Endothelial cell of umbilical vein (primary cell): ENCODE measurements at regions of chr3 and their contacts with region 1.

Region 1: DNA sequence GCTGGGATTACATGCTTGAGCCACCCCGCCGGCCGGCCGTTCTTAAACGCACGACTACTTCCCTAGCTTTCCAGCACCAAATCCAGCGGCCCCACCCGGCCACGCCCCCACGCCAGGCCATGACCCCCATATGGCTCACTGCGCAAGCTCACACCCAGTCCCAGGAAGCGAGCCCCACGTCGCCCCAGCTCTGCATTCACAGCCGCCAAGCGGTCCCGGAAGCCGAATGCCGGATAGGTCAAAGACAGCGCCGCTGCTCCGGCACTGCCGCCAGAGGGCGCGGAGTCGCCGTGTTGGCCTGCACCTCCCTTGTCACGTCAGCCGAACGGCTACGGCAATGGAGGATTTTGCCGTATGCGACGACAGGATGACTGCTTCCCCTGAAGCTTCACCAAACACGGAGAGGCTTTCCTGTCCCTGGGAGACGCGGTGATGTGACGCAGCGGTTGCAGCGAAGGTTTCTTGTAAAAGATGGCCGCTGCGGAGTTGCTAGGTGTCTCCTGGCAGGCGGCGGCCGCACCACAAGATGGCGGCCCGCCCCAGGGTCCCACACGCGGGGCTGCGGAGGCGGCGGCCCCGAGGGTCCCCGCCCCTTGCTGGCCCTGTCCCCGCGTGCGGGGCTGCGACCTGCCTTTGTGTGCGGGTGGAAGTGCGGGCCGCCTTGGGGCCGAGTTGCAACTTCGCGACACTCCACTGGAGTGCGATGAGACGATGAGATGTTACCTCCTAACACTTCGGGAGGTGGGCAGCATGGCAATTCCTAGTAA is 30.2 kb upstream of the RPN1 start:
- DNase-seq: peak; percentile 97
- H3K4me3 ChIP-seq: peak overlapping the region in 2 of 3 experiments; percentile 47 to 60
- H3K27ac ChIP-seq: peak overlapping the region; percentile 54
- H3K4me1 ChIP-seq: peaks cover 5% of the 10 kb centered on the region
- H3K27me3 ChIP-seq: no peaks in the 10 kb centered on the region
- CTCF ChIP-seq: peak; percentile 99
- POLR2A ChIP-seq: peak; percentile 71

Region 2: DNA sequence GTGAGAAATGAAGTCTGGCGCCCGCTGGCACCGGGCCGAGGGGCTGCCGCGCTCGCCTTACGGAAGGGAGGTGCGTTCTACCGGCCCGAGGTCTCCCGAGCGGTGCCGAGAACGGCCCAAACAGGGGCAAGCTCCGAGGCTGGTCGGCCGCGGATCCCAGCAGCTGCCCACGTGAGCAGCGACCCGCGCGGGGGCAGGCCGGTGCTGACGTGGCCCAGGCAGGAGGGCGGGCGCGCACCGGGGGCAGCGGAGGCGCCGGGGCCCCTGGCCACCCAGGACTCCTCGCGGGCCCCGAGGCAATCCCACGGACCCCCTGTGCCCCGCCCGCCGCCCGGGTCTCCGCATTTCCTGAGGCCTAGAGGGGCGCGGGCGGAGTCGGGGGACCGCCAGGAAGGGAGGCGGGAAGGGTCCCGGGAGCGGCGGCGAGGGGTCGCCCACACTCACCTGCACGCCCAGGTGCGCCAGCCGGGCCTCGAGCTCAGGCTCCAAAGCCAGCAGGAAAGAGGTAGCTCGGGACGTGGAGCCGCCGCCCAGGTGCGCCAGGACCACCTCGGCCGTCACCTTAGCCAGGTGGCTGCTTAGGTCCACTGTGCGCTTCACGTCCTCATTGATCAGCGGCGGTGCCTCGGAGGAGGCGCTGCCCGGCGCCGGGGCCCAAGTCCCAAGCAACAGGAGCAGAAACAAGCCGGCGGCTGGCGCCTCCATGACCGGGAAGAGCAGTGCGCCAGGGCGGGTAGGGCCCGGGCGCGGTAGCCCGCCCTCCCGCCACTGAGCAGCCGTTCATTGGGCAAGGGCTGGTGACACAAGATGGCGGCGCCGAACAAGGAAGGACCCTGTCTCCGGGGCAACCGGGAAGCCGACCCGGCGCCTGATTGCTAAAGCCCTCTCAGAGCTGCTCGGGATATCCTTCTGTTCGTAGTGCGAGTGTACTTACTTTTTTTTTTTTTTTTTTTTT is 30.4 kb before region 1 on chr3 and contains the start of gene RPN1:
- CTCF ChIA-PET with region 1: interaction called, 9 read pairs
- POLR2A ChIA-PET with region 1: interaction called, 5 read pairs
- dilution Hi-C with region 1: no loop called
- intact Hi-C with region 1: loop called (anchors 1 kb)
- DNase-seq: peak; percentile 97
- H3K4me3 ChIP-seq: peak within 1 kb of the TSS; percentile 92 to 99 (median 96)
- H3K27ac ChIP-seq: peak within 1 kb of the TSS; percentile 95
- H3K4me1 ChIP-seq: peaks cover 8% of the 10 kb centered on the region
- H3K27me3 ChIP-seq: no peaks in the 10 kb centered on the region
- CTCF ChIP-seq: no peak
- POLR2A ChIP-seq: peak; percentile 89
- total RNA-seq, gene RPN1: 244 and 250 TPM in 2 replicates

Region 3: GRCh38 chr3:128698211-128699064 is 17.7 kb after region 1 on chr3:
- CTCF ChIA-PET with region 1: interaction called, 20 read pairs
- POLR2A ChIA-PET with region 1: interaction called, 4 read pairs
- dilution Hi-C with region 1: no loop called
- intact Hi-C with region 1: no loop called
- DNase-seq: peak; percentile 23
- H3K4me3 ChIP-seq: peak overlapping the region; percentile 38 to 54 (median 52)
- H3K27ac ChIP-seq: no peak overlapping the region
- H3K4me1 ChIP-seq: no peaks in the 10 kb centered on the region
- H3K27me3 ChIP-seq: peaks cover 0 to 2% of the 10 kb centered on the region in 2 experiments
- CTCF ChIP-seq: no peak
- POLR2A ChIP-seq: no peak

Region 4: DNA sequence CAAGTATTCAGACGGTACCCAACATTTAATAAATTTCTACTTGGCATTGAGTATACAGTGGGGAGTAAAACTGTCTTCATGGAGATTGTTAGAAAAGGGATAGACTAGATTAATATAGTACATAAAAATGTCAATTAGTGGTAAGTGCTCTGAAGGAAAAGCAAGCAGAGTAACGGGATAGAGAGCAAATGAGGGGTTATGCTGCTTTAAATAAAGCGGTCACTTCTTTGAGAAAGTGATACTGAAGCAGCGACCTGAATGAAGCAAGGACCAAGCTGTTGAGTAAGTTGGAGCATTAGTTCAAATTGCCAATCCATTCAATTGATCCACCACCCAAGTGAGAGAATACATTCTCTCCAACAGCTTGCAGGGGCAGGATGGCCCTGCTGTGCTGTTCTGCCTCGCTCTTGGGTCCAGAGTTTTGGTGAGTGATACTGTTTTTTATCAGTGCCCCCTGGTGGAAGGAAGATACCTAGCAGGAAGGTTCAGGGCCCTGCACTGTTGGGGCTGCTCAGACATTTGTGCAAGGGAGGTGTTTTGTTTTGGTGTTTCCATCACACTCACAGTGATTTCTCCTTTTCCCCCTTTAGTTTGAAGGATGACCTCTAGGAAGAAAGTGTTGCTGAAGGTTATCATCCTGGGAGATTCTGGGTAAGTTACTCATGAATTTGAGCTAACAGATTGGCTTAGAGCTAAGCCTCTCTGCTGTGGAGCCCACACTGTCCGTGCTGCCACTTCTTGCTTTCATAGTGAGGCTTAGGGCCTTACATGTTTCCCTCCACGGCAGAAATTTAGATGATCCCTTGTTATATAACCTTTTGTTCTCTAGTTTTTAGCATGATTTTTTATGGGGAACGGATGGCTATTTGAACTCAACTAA is 114.2 kb after region 1 on chr3:
- CTCF ChIA-PET with region 1: interaction called, 84 read pairs
- POLR2A ChIA-PET with region 1: interaction called, 5 read pairs
- dilution Hi-C with region 1: no loop called
- intact Hi-C with region 1: loop called (anchors 1 kb)
- DNase-seq: peak; percentile 67
- H3K4me3 ChIP-seq: no peak overlapping the region
- H3K27ac ChIP-seq: no peak overlapping the region
- H3K4me1 ChIP-seq: peaks cover 15% of the 10 kb centered on the region
- H3K27me3 ChIP-seq: no peaks in the 10 kb centered on the region
- CTCF ChIP-seq: peak; percentile 69 to 82
- POLR2A ChIP-seq: peak; percentile 35

Region 5: GRCh38 chr3:128813097-128813496 is 132.3 kb after region 1 on chr3:
- CTCF ChIA-PET with region 1: interaction called, 14 read pairs
- POLR2A ChIA-PET with region 1: no interaction called
- dilution Hi-C with region 1: no loop called
- intact Hi-C with region 1: no loop called
- DNase-seq: peak; percentile 74
- H3K4me3 ChIP-seq: no peak overlapping the region
- H3K27ac ChIP-seq: peak overlapping the region; percentile 4
- H3K4me1 ChIP-seq: peaks cover 13% of the 10 kb centered on the region
- H3K27me3 ChIP-seq: no peaks in the 10 kb centered on the region
- CTCF ChIP-seq: no peak
- POLR2A ChIP-seq: no peak

Region 6: DNA sequence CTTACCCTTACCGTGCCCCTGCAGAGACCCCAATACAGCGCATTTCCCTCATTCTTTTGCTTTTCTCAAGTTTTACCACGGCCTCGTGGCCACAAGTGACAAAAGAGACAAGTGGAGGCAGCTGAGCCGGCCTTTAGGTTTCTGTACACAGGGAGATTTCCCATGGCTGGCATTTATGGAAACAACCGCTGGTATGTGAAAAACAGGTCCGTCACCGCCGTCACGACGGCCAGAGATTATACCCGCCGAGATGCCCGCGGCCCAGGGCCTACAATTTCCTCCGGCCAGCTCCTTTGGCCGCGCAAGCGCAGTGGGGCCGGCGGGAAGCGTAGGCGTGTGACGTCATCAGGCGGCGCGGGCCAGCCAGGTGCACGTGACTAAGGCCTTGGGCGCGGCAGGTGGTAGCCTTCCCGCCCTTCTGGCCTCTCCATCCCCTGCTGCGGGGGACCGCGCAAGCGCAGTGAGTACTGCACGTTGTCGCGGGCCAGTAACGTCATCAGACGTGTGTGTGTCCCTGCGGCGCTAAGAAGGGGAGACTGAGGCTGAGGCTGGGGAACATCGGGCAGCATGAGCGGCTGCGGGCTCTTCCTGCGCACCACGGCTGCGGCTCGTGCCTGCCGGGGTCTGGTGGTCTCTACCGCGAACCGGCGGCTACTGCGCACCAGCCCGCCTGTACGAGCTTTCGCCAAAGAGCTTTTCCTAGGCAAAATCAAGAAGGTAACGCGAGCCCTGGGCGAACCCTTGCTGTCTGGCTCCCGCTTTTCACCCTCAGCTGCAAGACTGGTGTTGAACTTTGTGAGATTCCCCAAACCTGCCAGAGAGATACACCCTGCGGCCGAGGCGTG is 198.6 kb after region 1 on chr3 and contains the start of gene ACAD9:
- CTCF ChIA-PET with region 1: interaction called, 22 read pairs
- POLR2A ChIA-PET with region 1: interaction called, 12 read pairs
- dilution Hi-C with region 1: no loop called
- intact Hi-C with region 1: loop called (anchors 1 kb)
- DNase-seq: peak; percentile 99
- H3K4me3 ChIP-seq: peak within 1 kb of the TSS; percentile 81 to 91 (median 90)
- H3K27ac ChIP-seq: peak within 1 kb of the TSS; percentile 95
- H3K4me1 ChIP-seq: peaks cover 23% of the 10 kb centered on the region
- H3K27me3 ChIP-seq: peaks cover 3 to 6% of the 10 kb centered on the region in 2 experiments
- CTCF ChIP-seq: no peak
- POLR2A ChIP-seq: peak; percentile 97
- total RNA-seq, gene ACAD9: 56.0 and 65.8 TPM in 2 replicates